Cardiac septum (tissue), 1 donor: ENCODE measurements at regions of chr2 and their contacts with region 1.

Region 1: GRCh38 chr2:38185012-38185491 is 109.1 kb upstream of the CYP1B1 start:
- DNase-seq: no peak

Region 2: GRCh38 chr2:38095996-38096861 is 88.8 kb before region 1 on chr2:
- intact Hi-C with region 1: loop called (anchors 5 kb)
- DNase-seq: peak; percentile 86

Region 3: DNA sequence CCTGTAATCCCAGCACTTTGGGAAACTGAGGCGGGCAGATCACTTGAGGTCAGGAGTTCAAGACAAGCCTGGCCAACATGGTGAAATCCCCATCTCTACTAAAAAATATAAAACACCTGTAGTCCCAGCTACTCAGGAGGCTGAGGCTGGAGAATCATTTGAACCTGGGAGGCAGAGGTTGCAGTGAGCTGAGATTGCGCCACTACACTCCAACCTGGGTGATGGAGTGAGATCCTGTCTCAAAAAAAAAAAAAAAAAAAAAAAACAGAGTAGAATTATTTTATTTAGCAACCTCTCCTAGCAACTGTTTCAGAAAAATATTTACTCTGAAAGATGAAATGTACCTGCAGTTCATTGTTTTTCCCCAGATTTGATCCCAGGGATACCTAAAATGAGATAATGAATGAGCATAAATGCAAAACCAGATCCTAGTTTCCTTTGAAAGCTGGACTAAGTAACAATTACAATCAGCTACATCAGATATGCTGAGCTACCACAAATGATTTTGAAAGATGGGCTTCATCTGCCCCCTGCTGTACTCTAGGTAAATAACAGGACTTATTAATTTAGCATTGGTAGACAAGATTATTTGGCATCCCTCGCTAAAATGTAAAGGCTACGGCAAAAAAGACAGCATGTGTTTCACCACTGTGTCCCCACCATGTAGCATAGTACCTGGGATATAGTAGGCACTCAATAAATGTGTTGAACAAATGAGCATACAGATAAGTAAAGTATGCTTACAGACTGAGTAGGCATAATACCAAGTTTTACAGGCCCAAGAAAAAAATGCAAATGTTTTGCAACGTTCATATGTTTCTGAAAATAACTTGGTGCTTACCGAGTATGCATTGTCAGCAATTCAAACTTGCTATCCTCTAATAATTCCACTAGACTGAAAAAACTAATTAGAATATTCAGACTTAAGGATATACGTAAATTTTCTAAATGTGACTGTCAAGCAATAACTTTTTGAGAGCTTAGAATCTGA is 89.5 kb after region 1 on chr2:
- intact Hi-C with region 1: no loop called
- DNase-seq: no peak